B cell (primary cell): ENCODE measurements at regions of chr1 and their contacts with region 1.

Region 1: GRCh38 chr1:178599745-178600144 is 86.8 kb downstream of the TEX35 start:
- DNase-seq: peak; percentile 51
- ATAC-seq: peak; percentile 62
- H3K4me3 ChIP-seq: peak overlapping the region in 1 of 5 experiments; percentile 0
- H3K4me3 Mint-ChIP-seq: peak overlapping the region; percentile 2
- H3K27ac ChIP-seq: peak overlapping the region; percentile 57 to 85
- H3K27ac Mint-ChIP-seq: peak overlapping the region; percentile 91
- H3K4me1 ChIP-seq: peaks cover 73 to 92% of the 10 kb centered on the region in 2 donors
- H3K4me1 Mint-ChIP-seq: peaks cover 84% of the 10 kb centered on the region
- H3K27me3 ChIP-seq: no peaks in the 10 kb centered on the region
- H3K27me3 Mint-ChIP-seq: no peaks in the 10 kb centered on the region
- CTCF ChIP-seq: no peak

Region 2: DNA sequence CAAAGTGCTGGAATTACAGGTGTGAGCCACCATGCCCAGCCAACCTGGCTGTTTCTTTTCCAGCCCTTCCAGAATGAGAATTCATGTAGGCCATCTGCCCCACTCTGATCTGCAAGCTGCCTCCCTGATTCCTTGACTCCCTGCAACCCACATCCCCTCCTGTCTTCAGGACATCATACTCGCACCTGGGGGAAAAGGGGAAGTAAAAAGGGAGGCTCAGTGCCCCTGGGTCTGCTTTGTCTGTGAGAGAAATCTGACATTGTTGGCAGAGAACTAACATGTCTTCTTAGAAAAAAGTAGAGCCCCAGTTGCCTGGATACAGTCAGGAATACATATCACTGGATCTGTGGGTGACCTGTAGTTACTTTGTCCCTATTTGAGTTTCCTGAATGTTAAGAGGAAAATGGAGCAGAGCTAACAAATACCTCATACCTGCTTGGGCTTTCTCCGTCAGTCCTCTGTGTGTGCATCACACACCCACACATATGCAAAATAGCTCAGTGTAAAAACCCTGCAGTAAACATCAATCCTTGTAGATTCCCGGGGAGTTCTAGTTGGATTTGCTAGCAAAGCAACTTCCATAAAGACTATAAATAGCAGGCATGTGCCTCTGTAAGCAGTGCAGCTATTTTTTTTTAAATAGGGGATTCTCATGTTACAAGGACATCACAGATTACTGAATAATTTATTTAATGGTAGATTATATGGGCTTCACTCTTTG is 24.0 kb before region 1 on chr1:
- CTCF ChIA-PET with region 1: interaction called, 53 read pairs
- POLR2A ChIA-PET with region 1: interaction called, 15 read pairs
- intact Hi-C with region 1: no loop called
- DNase-seq: peak; percentile 85
- ATAC-seq: peak; percentile 36
- H3K4me3 ChIP-seq: peak overlapping the region in 3 of 5 experiments; percentile 0 to 39 (median 2)
- H3K4me3 Mint-ChIP-seq: peak overlapping the region; percentile 75
- H3K27ac ChIP-seq: peak overlapping the region; percentile 95 to 97
- H3K27ac Mint-ChIP-seq: peak overlapping the region; percentile 93
- H3K4me1 ChIP-seq: peaks cover 79 to 88% of the 10 kb centered on the region in 2 donors
- H3K4me1 Mint-ChIP-seq: peaks cover 81% of the 10 kb centered on the region
- H3K27me3 ChIP-seq: no peaks in the 10 kb centered on the region
- H3K27me3 Mint-ChIP-seq: no peaks in the 10 kb centered on the region
- CTCF ChIP-seq: no peak

Region 3: GRCh38 chr1:178581351-178582303 is 18.1 kb before region 1 on chr1:
- CTCF ChIA-PET with region 1: interaction called, 53 read pairs
- POLR2A ChIA-PET with region 1: interaction called, 13 read pairs
- intact Hi-C with region 1: no loop called
- DNase-seq: peak; percentile 87
- ATAC-seq: peak; percentile 65
- H3K4me3 ChIP-seq: peak overlapping the region in 3 of 5 experiments; percentile 24 to 53 (median 29)
- H3K4me3 Mint-ChIP-seq: peak overlapping the region; percentile 70
- H3K27ac ChIP-seq: peak overlapping the region; percentile 95 to 97
- H3K27ac Mint-ChIP-seq: peak overlapping the region; percentile 95
- H3K4me1 ChIP-seq: peaks cover 91 to 92% of the 10 kb centered on the region in 2 donors
- H3K4me1 Mint-ChIP-seq: peaks cover 93% of the 10 kb centered on the region
- H3K27me3 ChIP-seq: no peaks in the 10 kb centered on the region
- H3K27me3 Mint-ChIP-seq: no peaks in the 10 kb centered on the region
- CTCF ChIP-seq: no peak

Region 4: DNA sequence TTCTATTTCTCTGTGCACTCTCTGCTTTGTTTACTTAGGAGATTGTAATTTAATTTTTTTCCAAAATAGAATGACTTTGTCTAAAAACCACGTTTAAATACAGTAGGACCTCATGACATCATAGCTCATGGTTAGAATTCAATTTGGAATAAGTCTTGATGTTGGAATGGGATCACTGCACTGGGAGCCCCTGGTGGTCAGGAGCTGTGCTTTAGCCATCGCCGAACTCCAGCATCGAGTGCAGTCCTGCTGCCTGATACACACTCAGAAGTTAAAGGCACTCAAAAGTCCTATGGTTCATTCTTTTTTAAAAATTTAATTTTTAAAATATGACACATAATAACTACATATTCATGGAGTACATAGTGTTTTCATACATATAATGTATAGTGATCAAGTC is 11.8 kb before region 1 on chr1:
- CTCF ChIA-PET with region 1: interaction called, 39 read pairs
- POLR2A ChIA-PET with region 1: interaction called, 4 read pairs
- intact Hi-C with region 1: no loop called
- DNase-seq: no peak
- ATAC-seq: no peak
- H3K4me3 ChIP-seq: no peak overlapping the region
- H3K4me3 Mint-ChIP-seq: peak overlapping the region; percentile 43
- H3K27ac ChIP-seq: no peak overlapping the region
- H3K27ac Mint-ChIP-seq: no peak overlapping the region
- H3K4me1 ChIP-seq: peaks cover 49 to 68% of the 10 kb centered on the region in 2 donors
- H3K4me1 Mint-ChIP-seq: peaks cover 86% of the 10 kb centered on the region
- H3K27me3 ChIP-seq: no peaks in the 10 kb centered on the region
- H3K27me3 Mint-ChIP-seq: no peaks in the 10 kb centered on the region
- CTCF ChIP-seq: no peak